Activated CD4-positive, alpha-beta memory T cell treated with anti-CD3 and anti-CD28 coated beads for 36 hours (primary cell): ENCODE measurements at regions of chr12 and their contacts with region 1.

Region 1: GRCh38 chr12:47085815-47086252 is 6.1 kb upstream of the AMIGO2 start:
- DNase-seq: peak; percentile 59
- H3K4me3 Mint-ChIP-seq: peak overlapping the region; percentile 47
- H3K27ac Mint-ChIP-seq: peak overlapping the region; percentile 69
- H3K4me1 Mint-ChIP-seq: peaks cover 51% of the 10 kb centered on the region
- H3K27me3 Mint-ChIP-seq: no peaks in the 10 kb centered on the region

Region 2: DNA sequence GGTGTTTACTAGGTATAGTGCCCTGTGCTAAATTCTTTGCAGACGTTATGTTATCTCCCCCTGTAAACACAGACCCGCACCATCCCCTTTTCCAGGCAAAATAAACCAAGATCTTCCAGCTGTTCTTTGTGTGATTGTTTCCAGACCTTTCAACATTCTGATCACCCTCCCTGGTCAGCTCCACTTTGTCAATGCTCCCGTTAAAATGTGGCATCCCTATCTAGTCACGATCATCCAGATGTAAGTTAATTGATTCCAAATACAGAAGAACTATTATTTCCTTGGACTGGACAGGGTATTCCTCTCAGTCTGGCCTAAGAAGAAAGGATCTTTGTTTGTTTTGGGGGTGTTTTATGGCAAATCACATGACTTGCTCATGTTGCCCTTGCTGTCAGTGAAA is 1483.9 kb before region 1 on chr12:
- CTCF ChIA-PET with region 1: no interaction called
- POLR2A ChIA-PET with region 1: no interaction called
- intact Hi-C with region 1: no loop called
- DNase-seq: no peak
- H3K4me3 Mint-ChIP-seq: no peak overlapping the region
- H3K27ac Mint-ChIP-seq: no peak overlapping the region
- H3K4me1 Mint-ChIP-seq: no peaks in the 10 kb centered on the region
- H3K27me3 Mint-ChIP-seq: peaks cover 1% of the 10 kb centered on the region

Region 3: GRCh38 chr12:47071241-47071852 is 14.5 kb before region 1 on chr12:
- CTCF ChIA-PET with region 1: interaction called, 49 read pairs
- POLR2A ChIA-PET with region 1: interaction called, 3 read pairs
- intact Hi-C with region 1: loop called (anchors 1 kb)
- DNase-seq: no peak
- H3K4me3 Mint-ChIP-seq: no peak overlapping the region
- H3K27ac Mint-ChIP-seq: no peak overlapping the region
- H3K4me1 Mint-ChIP-seq: peaks cover 21% of the 10 kb centered on the region
- H3K27me3 Mint-ChIP-seq: no peaks in the 10 kb centered on the region

Region 4: DNA sequence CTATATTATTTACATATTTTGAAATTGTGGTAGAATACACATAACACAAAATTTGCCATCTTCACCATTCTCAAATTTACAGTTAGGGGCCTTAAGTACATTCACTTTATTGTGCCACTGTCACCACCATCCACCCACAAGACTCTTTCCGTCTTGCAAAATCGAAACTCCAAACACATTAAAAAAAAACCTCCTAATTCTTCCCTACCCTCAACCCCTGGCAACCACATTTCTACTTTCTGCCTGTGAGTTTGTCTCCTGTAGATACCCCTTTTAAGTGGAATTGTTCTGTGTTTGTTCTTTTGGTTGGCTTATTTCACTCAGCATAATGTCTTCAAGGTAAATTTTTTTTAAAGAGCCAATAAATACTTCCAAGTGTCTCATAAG is 25.6 kb after region 1 on chr12:
- CTCF ChIA-PET with region 1: no interaction called
- POLR2A ChIA-PET with region 1: interaction called, 4 read pairs
- intact Hi-C with region 1: loop called (anchors 1 kb)
- DNase-seq: peak; percentile 56
- H3K4me3 Mint-ChIP-seq: no peak overlapping the region
- H3K27ac Mint-ChIP-seq: no peak overlapping the region
- H3K4me1 Mint-ChIP-seq: peaks cover 38% of the 10 kb centered on the region
- H3K27me3 Mint-ChIP-seq: no peaks in the 10 kb centered on the region

Region 5: DNA sequence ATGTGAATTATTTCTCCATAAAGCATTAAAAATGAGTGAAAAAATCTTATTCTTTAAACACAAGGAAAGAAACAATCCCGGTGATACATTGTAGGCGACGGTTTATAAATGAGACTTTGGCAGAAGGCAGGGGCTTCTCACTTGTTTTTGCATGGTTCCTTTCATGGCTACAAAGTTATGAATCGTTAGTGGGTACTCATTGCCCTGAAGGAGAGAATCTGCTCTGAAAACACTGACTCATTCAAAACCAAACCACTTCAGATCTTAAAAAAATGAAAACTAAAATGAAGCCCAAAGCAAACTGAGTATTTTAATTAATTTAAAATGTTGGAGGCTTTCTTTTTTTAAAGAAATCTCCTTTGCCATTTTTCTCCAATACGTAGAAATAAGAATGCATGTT is 35.3 kb after region 1 on chr12:
- CTCF ChIA-PET with region 1: no interaction called
- POLR2A ChIA-PET with region 1: no interaction called
- intact Hi-C with region 1: loop called (anchors 2 kb)
- DNase-seq: no peak
- H3K4me3 Mint-ChIP-seq: no peak overlapping the region
- H3K27ac Mint-ChIP-seq: peak overlapping the region; percentile 94
- H3K4me1 Mint-ChIP-seq: peaks cover 35% of the 10 kb centered on the region
- H3K27me3 Mint-ChIP-seq: no peaks in the 10 kb centered on the region

Region 6: GRCh38 chr12:47207340-47207717 is 121.5 kb after region 1 on chr12:
- CTCF ChIA-PET with region 1: no interaction called
- POLR2A ChIA-PET with region 1: interaction called, 92 read pairs
- intact Hi-C with region 1: loop called (anchors 1 kb)
- DNase-seq: peak; percentile 75
- H3K4me3 Mint-ChIP-seq: peak overlapping the region; percentile 85
- H3K27ac Mint-ChIP-seq: peak overlapping the region; percentile 96
- H3K4me1 Mint-ChIP-seq: peaks cover 80% of the 10 kb centered on the region
- H3K27me3 Mint-ChIP-seq: no peaks in the 10 kb centered on the region

Region 7: DNA sequence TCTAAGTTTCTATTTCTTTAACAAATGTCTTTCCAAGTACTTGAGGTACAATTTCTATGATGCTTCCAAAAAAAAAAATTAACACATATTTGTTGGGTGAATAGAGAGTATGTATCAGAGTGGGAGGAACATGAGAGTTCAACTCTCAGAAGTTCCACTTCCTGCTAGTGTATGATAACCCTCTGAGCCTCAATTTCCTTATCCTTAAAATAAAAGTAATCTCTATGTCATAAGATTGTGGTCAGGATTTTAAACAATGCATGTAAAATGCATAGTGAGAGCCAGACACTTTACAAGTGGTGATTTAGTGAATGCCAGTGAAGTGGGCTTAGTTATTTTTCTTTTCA is 264.2 kb after region 1 on chr12:
- CTCF ChIA-PET with region 1: no interaction called
- POLR2A ChIA-PET with region 1: no interaction called
- intact Hi-C with region 1: loop called (anchors 2 kb)
- DNase-seq: no peak
- H3K4me3 Mint-ChIP-seq: peak overlapping the region; percentile 58
- H3K27ac Mint-ChIP-seq: peak overlapping the region; percentile 100
- H3K4me1 Mint-ChIP-seq: peaks cover 69% of the 10 kb centered on the region
- H3K27me3 Mint-ChIP-seq: no peaks in the 10 kb centered on the region